Prostate gland (tissue), 2 donors: ENCODE measurements at regions of chr10 and their contacts with region 1.

Region 1: DNA sequence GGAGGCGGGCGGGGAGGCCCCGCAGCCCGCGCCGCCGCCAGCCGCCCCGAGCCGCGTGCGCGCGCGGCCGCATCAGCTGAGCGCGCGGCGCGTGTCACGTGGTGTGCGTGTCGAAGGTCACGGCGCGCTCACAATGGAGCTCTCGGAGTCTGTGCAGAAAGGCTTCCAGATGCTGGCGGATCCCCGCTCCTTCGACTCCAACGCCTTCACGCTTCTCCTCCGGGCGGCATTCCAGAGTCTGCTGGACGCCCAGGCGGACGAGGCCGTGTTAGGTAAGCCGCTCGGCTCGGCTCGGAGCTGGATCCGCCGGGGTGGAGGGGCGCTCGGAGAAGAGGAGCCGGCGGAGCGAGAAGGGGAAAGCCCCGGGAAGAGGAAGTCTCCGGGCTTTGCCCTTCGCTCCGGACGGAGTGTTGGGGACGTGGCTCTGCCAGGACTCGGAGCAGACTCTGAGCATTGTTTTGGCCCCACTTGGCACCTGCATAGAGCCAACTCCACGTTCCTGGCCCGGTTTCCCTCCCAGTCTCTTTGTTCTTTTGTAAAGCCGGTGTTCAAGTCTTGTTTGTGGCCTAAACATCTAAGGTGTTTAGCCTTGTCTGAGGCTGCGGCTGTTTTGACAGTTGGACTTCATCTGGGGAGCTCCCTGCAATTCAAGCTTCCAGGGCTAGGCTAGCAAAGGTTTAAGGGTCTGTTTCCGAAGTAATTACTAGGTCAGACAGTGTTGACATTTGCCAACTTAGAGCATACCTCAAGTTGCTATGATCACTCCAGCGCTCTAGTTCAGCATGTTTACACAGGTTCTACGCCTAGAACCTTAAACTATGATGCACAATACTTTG is at the start of gene COMMD3:
- DNase-seq: peak; percentile 87
- H3K4me3 ChIP-seq: peak within 1 kb of the TSS; percentile 72 to 93
- H3K27ac ChIP-seq: peak within 1 kb of the TSS; percentile 88 to 97
- H3K4me1 ChIP-seq: peaks cover 7% of the 10 kb centered on the region
- H3K27me3 ChIP-seq: no peaks in the 10 kb centered on the region
- CTCF ChIP-seq: no peak
- POLR2A ChIP-seq: peak; percentile 83
- total RNA-seq, gene COMMD3: 30.7 to 38.8 TPM

Region 2: DNA sequence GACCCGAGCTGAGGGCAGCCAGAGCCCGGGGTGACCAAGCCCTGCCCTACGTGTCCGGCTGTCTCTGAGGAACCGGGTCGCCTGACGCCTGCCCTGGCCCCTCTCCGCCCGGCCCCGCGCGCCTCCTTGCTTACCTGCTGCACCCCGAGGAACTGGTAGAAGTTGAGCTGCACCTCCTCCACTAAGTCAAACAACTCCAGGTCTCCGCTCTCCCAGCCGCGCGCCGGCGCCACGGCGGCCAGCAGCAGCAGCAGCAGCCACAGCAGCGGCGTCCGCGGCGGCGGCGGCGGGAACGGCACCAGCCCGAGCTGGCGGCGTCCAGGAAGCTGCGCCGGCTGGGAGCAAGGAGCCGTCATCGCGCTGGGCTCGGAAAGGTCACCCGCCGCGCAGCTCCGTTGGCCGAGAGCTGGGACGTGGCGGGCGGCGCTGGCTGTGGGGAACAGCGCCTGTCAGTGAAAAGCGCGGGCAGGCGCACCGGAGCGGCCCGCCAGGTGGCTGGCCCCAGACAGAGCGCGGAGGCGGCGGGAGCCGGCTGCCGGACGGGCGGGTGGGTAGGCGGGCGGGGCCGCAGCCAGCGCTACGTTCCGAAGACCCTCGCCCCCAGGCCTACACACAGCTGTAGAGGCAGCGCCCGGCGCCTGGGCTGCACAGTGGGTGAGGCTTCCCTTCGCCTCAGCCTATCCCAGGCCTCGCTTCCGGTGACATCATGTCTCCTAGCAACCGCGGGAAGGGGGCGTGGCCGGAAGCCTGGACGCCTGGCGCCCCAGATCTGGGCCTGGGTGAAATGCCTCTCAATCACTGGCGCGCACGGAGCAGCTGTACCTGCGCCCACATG is 313.2 kb before region 1 on chr10 and contains the start of gene DNAJC1:
- intact Hi-C with region 1: loop called (anchors 5 kb)
- DNase-seq: peak; percentile 98
- H3K4me3 ChIP-seq: peak within 1 kb of the TSS; percentile 81 to 91
- H3K27ac ChIP-seq: peak within 1 kb of the TSS; percentile 95 to 96
- H3K4me1 ChIP-seq: no peaks in the 10 kb centered on the region
- H3K27me3 ChIP-seq: no peaks in the 10 kb centered on the region
- CTCF ChIP-seq: peak in 2 of 4 experiments; percentile 25 to 34
- POLR2A ChIP-seq: peak; percentile 98
- total RNA-seq, gene DNAJC1: 62.8 to 89.3 TPM

Region 3: DNA sequence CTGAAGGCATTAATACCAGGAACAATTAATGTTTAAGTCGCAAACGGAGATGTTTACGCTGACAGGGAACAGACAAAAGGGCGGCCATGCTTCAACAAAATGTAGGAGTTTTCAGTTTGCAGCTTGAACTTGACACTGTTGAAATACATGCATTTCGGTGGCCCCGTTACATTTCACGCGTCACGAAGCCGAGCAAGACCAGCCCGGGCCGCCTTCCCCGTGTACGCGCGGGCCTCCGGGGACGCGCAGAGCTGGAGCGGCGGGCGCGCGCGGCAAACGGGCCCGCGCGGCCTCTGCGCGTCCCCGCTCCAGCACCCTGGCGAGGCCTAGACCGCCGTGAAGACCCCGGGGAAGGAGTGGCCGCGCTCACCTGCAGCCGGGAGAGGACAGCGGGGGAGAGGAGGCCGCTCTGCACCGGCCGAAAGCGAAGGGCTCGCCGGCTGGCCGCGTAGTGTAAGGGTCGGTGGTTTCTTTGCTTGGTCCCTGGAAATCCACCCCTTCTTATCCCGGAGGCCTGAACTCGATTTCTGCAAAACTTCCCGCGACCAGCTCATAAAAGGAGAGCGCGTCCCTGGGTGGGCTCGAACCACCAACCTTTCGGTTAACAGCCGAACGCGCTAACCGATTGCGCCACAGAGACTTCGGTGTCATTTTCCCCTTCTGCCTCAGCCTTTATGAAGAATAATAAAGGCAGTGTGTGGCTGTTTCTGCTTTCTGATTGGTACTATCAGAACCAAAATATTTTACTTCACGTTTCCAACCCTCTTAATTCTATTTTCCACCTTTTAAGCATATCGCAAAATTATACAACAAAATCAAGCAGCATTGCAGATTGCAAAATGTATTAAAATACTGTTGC is 87.3 kb before region 1 on chr10:
- intact Hi-C with region 1: loop called (anchors 1 kb)
- DNase-seq: peak; percentile 86
- H3K4me3 ChIP-seq: peak overlapping the region; percentile 68 to 71
- H3K27ac ChIP-seq: peak overlapping the region; percentile 91 to 97
- H3K4me1 ChIP-seq: no peaks in the 10 kb centered on the region
- H3K27me3 ChIP-seq: no peaks in the 10 kb centered on the region
- CTCF ChIP-seq: peak in 1 of 4 experiments; percentile 17
- POLR2A ChIP-seq: peak; percentile 21

Region 4: GRCh38 chr10:22251751-22252223 is 64.7 kb before region 1 on chr10:
- intact Hi-C with region 1: loop called (anchors 2 kb)
- DNase-seq: peak; percentile 54
- H3K4me3 ChIP-seq: peak overlapping the region; percentile 60 to 62
- H3K27ac ChIP-seq: peak overlapping the region; percentile 91 to 92
- H3K4me1 ChIP-seq: no peaks in the 10 kb centered on the region
- H3K27me3 ChIP-seq: no peaks in the 10 kb centered on the region
- CTCF ChIP-seq: peak in 1 of 4 experiments; percentile 2
- POLR2A ChIP-seq: no peak

Region 5: GRCh38 chr10:22988581-22989360 is 672.3 kb after region 1 on chr10:
- intact Hi-C with region 1: loop called (anchors 2 kb)
- DNase-seq: peak; percentile 68
- H3K4me3 ChIP-seq: no peak overlapping the region
- H3K27ac ChIP-seq: no peak overlapping the region
- H3K4me1 ChIP-seq: no peaks in the 10 kb centered on the region
- H3K27me3 ChIP-seq: no peaks in the 10 kb centered on the region
- CTCF ChIP-seq: peak; percentile 76 to 92 (median 90)
- POLR2A ChIP-seq: no peak

Region 6: DNA sequence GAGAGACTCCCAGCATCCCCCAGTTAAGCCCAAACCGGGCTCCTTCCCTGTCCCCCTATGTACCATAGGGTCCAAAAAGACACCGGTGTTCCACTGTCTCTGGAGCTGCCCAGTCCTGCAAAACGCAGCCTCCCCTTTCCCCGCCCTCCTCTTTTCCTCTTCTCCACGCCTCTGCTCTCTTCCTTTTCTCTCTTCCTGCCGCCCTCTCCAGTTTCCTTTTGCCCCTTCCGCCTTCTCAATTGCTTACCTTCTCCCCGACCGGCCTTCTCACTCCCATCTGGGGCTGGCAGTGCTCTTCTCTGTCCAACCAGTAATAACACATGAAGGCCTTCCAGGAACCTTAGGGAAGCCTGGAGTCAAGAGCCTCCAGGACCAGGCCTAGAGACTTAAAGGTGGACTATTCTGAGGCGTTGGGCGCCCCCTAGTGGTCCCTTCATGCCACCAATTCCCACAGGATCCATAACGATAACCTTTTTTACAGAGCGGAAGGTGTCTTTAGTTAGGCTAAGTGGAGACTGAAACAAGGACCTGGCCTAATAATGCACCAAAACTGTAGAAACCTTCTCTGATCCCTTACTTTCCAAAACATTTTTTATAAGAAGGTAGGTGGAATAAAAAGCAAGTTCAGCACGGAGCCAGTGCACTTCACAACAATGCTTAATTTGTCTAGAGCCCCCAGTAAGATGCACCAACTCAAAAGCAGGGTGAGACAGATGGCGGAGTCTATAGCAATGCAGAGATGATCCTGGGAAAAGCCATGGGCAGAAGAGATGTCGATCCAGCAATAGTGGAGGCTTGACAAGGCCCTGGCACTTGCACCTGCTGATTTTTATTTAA is 751.7 kb after region 1 on chr10:
- intact Hi-C with region 1: loop called (anchors 10 kb)
- DNase-seq: peak; percentile 64
- H3K4me3 ChIP-seq: no peak overlapping the region
- H3K27ac ChIP-seq: no peak overlapping the region
- H3K4me1 ChIP-seq: no peaks in the 10 kb centered on the region
- H3K27me3 ChIP-seq: no peaks in the 10 kb centered on the region
- CTCF ChIP-seq: peak; percentile 44 to 73 (median 65)
- POLR2A ChIP-seq: no peak